ENCODE measurements at regions of chr5 and their contacts with region 1.

Region 1: DNA sequence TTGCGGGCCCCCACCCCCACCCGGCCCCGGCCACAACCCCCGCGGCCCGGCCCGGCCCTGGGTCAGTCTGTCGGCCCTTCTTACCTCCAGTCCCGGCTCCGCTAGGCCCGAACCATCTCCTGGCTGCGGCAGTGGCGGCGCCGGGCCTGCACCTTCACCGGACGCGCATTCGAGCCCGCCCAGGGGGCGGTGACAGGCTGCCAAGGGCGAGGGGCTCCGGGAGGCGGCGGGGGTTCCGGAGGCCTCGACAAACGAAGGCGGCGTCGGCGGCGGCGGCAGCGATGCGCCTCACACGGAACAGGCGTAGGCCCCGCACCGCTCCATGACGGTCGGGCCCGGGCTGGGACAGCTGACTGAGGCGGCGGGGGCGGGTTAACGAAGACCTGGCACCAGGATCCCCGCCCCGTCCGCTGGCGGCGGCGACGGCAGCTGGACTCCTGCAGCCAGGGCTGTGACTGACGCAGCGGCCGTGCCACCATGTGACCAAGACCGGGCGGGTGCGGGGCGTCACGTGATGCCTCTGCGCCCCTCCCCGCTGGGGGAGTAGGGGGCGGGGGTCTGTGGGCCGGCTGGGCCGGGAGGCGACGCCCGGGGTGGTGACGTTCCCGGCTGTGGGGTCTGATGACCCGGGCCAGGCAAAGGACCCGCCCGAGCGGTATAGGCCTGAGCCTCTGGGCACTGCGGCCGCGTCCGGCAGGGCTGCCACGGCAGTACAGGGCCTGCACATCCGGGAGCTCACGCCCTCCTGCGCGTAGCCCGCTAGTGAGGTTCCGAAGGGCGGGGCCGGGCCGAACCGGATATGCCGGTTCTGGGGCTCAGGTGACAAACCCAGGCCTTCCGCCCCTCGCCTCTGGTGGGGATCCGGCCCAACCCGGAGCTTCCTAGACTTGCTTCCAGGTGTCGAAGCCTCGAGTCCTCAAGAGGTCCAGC is at the start of gene AFF4:
- DNase-seq: peak; percentile 99
- H3K4me3 Mint-ChIP-seq: peak within 1 kb of the TSS; percentile 86
- H3K27ac Mint-ChIP-seq: peak within 1 kb of the TSS; percentile 98
- H3K4me1 Mint-ChIP-seq: no peaks in the 10 kb centered on the region
- H3K27me3 Mint-ChIP-seq: no peaks in the 10 kb centered on the region
- CTCF ChIP-seq: no peak
- total RNA-seq, gene AFF4: 87.1 and 102 TPM in 2 replicates

Region 2: DNA sequence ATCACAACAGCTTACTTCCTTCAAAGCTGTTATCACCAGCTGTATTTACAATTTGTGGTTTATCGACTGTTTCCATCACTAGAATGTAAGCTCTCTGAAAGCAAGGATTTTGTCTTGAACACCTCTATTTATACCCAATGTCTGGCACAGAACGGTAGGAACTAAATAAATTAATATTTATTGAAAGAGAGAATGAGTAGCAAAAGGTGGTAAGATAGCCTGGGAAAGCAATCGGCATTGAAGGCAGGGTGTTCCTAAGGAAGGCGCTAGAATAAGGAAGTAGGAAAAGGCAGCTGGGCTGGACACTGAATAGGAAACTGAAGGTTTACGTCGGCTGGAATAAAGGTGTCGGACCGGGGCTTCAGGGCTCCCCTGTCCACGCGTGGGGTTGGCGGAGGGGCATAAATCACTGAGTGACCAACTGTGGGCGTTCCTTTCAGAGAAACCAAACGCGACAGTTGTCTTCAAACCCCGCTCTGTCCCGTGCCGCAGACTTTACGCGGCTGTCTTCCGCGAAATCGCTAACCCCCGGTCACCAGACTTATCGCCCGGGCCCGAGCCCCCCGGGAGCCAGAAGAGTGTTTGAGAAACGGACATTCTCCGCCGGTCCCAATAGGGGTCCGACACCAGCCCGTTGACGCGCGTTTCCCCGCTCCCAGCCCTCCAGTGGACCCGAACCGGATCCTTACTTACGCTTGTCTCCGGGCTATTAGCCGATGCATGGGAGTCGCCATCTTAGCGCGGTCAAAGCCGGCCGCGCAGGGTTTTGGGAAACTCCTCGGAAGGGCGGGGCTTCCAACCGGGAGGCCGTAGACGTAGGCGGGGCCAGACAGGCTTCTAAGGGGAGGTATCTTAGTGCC is 62.6 kb after region 1 on chr5 and contains the start of gene ZCCHC10:
- CTCF ChIA-PET with region 1: interaction called, 4 read pairs
- intact Hi-C with region 1: loop called (anchors 2 kb)
- DNase-seq: peak; percentile 96
- H3K4me3 Mint-ChIP-seq: peak within 1 kb of the TSS; percentile 90
- H3K27ac Mint-ChIP-seq: peak within 1 kb of the TSS; percentile 95
- H3K4me1 Mint-ChIP-seq: peaks cover 30% of the 10 kb centered on the region
- H3K27me3 Mint-ChIP-seq: no peaks in the 10 kb centered on the region
- CTCF ChIP-seq: no peak
- total RNA-seq, gene ZCCHC10: 25.9 and 31.8 TPM in 2 replicates

Region 3: GRCh38 chr5:133051580-133052332 is 88.3 kb after region 1 on chr5 and contains the start of gene HSPA4:
- CTCF ChIA-PET with region 1: no interaction called
- intact Hi-C with region 1: loop called (anchors 2 kb)
- DNase-seq: peak; percentile 98
- H3K4me3 Mint-ChIP-seq: peak within 1 kb of the TSS; percentile 95
- H3K27ac Mint-ChIP-seq: peak within 1 kb of the TSS; percentile 99
- H3K4me1 Mint-ChIP-seq: peaks cover 52% of the 10 kb centered on the region
- H3K27me3 Mint-ChIP-seq: no peaks in the 10 kb centered on the region
- CTCF ChIP-seq: no peak
- total RNA-seq, gene HSPA4: 294 and 296 TPM in 2 replicates